Endothelial cell of umbilical vein (primary cell): ENCODE measurements at regions of chr9 and their contacts with region 1.

Region 1: GRCh38 chr9:8660383-8660782 is 860.8 kb upstream of the DMAC1 start:
- DNase-seq: peak; percentile 20
- H3K4me3 ChIP-seq: no peak overlapping the region
- H3K27ac ChIP-seq: no peak overlapping the region
- H3K4me1 ChIP-seq: no peaks in the 10 kb centered on the region
- H3K27me3 ChIP-seq: no peaks in the 10 kb centered on the region
- CTCF ChIP-seq: no peak
- POLR2A ChIP-seq: no peak

Region 2: DNA sequence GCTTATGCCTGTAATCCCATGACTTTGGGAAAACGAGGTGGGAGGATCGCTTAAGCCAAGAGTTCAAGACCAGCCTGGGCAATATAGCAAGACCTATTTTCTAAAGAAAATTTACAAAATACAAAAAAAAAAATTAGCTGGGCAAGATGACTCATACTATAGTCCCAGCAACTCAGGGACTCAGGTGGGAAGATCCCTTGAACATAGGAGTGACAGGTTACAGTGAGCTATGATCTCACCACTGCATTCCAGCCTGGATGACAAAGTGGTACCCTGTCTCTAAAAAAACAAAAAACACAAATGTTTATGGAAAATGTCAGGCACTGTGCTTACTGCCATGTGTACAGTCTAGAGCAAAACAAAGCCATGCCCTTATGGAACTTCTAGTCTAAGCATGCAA is 37.5 kb before region 1 on chr9:
- CTCF ChIA-PET with region 1: no interaction called
- POLR2A ChIA-PET with region 1: no interaction called
- dilution Hi-C with region 1: no loop called
- intact Hi-C with region 1: loop called (anchors 1 kb)
- DNase-seq: no peak
- H3K4me3 ChIP-seq: no peak overlapping the region
- H3K27ac ChIP-seq: no peak overlapping the region
- H3K4me1 ChIP-seq: no peaks in the 10 kb centered on the region
- H3K27me3 ChIP-seq: no peaks in the 10 kb centered on the region
- CTCF ChIP-seq: no peak
- POLR2A ChIP-seq: no peak

Region 3: GRCh38 chr9:8643896-8644295 is 16.5 kb before region 1 on chr9:
- CTCF ChIA-PET with region 1: no interaction called
- POLR2A ChIA-PET with region 1: no interaction called
- dilution Hi-C with region 1: no loop called
- intact Hi-C with region 1: no loop called
- DNase-seq: no peak
- H3K4me3 ChIP-seq: no peak overlapping the region
- H3K27ac ChIP-seq: no peak overlapping the region
- H3K4me1 ChIP-seq: no peaks in the 10 kb centered on the region
- H3K27me3 ChIP-seq: no peaks in the 10 kb centered on the region
- CTCF ChIP-seq: no peak
- POLR2A ChIP-seq: no peak

Region 4: DNA sequence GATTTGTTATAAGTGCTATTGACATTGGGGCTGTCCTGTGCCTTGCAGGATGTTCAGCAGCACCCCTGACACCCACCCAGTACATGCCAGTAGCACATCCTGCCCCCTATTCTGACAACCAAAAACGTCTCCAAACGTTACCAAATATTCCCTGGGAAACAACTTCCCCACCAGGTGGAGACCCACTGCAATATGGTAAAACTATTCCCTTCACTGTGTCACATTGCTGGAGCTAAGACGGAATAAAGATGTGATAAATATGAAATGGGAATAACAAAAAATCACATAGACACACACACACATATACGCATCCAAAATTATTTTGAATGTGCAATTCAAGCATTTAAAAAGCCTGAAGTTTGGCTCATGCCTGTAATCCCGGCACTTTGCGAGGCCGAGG is 13.4 kb after region 1 on chr9:
- CTCF ChIA-PET with region 1: interaction called, 3 read pairs
- POLR2A ChIA-PET with region 1: interaction called, 18 read pairs
- dilution Hi-C with region 1: no loop called
- intact Hi-C with region 1: loop called (anchors 1 kb)
- DNase-seq: no peak
- H3K4me3 ChIP-seq: no peak overlapping the region
- H3K27ac ChIP-seq: no peak overlapping the region
- H3K4me1 ChIP-seq: no peaks in the 10 kb centered on the region
- H3K27me3 ChIP-seq: no peaks in the 10 kb centered on the region
- CTCF ChIP-seq: no peak
- POLR2A ChIP-seq: no peak

Region 5: DNA sequence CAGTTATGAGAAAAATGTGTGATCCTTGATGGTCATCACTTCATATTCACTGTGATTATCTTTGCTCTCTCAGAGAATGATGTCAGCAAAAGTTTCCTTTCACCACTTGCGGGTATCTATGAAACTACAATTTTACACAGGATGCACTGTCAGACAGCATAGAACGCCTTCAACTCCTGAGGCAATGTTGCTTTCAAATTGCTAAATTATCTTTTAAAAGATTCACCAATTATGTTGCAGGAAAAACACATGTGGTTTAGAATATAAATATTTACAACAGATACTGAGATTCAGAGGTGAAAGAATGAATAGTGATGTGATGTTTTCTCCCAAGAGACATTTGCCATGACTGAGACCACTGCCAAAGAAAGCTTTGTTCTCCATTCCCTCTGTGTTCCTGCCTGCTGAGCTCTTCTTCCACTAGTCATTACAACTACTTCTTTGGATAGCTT is 19.0 kb after region 1 on chr9:
- CTCF ChIA-PET with region 1: interaction called, 3 read pairs
- POLR2A ChIA-PET with region 1: interaction called, 18 read pairs
- dilution Hi-C with region 1: no loop called
- intact Hi-C with region 1: no loop called
- DNase-seq: no peak
- H3K4me3 ChIP-seq: no peak overlapping the region
- H3K27ac ChIP-seq: no peak overlapping the region
- H3K4me1 ChIP-seq: no peaks in the 10 kb centered on the region
- H3K27me3 ChIP-seq: no peaks in the 10 kb centered on the region
- CTCF ChIP-seq: no peak
- POLR2A ChIP-seq: no peak